HepG2 (cell line): ENCODE measurements at regions of chr3 and their contacts with region 1.

Region 1: GRCh38 chr3:159787191-159787590 is 201.4 kb upstream of the IL12A start:
- DNase-seq: peak; percentile 85
- ATAC-seq: peak; percentile 78
- H3K4me3 ChIP-seq: no peak overlapping the region; a peak in 1 of 6 replicates
- H3K27ac ChIP-seq: peak overlapping the region; percentile 72
- H3K4me1 ChIP-seq: peaks cover 89% of the 10 kb centered on the region
- H3K27me3 ChIP-seq: no peaks in the 10 kb centered on the region; a peak in 1 of 5 replicates
- CTCF ChIP-seq: no peak
- EP300 ChIP-seq: peak in 1 of 2 experiments; percentile 90; a peak in 2 of 4 replicates
- POLR2A ChIP-seq: no peak
- RAD21 ChIP-seq: no peak

Region 2: GRCh38 chr3:159763602-159764489 is 23.3 kb before region 1 on chr3:
- CTCF ChIA-PET with region 1: no interaction called
- POLR2A ChIA-PET with region 1: no interaction called
- in situ Hi-C with region 1: no loop called
- intact Hi-C with region 1: loop called (anchors 2 kb)
- DNase-seq: no peak
- ATAC-seq: peak; percentile 85
- H3K4me3 ChIP-seq: peak overlapping the region; percentile 50 to 73 (median 61); a peak in 5 of 6 replicates
- H3K27ac ChIP-seq: no peak overlapping the region
- H3K4me1 ChIP-seq: peaks cover 18% of the 10 kb centered on the region
- H3K27me3 ChIP-seq: peaks cover 10 to 44% of the 10 kb centered on the region in 2 experiments
- CTCF ChIP-seq: peak; percentile 13; the same call in 1 of the 2 replicates
- EP300 ChIP-seq: no peak
- POLR2A ChIP-seq: no peak
- RAD21 ChIP-seq: no peak

Region 3: DNA sequence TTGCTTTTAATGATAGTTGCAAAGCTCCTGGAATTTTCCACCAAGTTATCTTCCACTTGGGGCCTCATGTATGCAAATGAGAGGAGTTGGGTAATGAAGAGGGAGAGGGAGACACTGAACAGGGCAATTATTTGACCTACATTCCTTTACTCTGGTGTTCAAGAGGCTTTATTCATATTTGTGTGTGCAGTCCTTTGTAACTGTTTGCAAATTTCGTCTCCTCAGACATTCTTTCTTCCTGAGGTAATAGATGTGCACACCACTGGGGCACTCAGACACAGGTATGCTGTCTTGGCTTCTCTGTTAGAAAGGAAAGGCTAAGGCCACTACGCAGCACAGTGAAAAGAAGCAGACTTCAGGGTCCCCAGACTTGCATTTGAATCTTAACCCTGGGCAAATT is 11.8 kb after region 1 on chr3:
- CTCF ChIA-PET with region 1: interaction called, 33 read pairs
- POLR2A ChIA-PET with region 1: no interaction called
- in situ Hi-C with region 1: no loop called
- intact Hi-C with region 1: loop called (anchors 1 kb)
- DNase-seq: peak; percentile 57
- ATAC-seq: peak; percentile 68
- H3K4me3 ChIP-seq: no peak overlapping the region
- H3K27ac ChIP-seq: no peak overlapping the region
- H3K4me1 ChIP-seq: peaks cover 30% of the 10 kb centered on the region
- H3K27me3 ChIP-seq: no peaks in the 10 kb centered on the region
- CTCF ChIP-seq: no peak
- EP300 ChIP-seq: no peak
- POLR2A ChIP-seq: no peak
- RAD21 ChIP-seq: no peak